AG04449 (cell line): ENCODE measurements at regions of chr11 and their contacts with region 1.

Region 1: GRCh38 chr11:74559110-74559933 is 33.1 kb upstream of the POLD3 start:
- DNase-seq: no peak
- H3K4me3 ChIP-seq: no peak overlapping the region
- CTCF ChIP-seq: no peak

Region 2: DNA sequence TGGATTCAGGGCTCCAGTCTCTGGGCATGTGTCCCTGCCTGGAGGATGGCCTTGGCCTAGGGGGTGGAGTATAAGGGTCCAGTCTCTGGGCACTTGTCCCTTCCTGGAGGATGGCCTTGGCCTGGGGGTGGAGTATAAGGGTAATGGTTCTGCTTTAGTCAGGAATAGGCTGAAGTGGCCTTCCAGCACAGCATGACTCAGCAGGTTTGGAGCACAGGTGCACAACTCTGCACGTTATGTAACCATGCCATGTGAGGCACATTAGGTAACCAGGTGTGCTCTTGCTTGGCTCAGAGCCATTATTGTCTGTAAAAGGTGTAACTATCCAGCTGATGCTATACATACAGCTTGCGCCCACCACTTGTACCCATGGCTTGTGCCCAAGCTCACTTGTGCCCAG is 15.3 kb before region 1 on chr11:
- CTCF ChIA-PET with region 1: no interaction called
- POLR2A ChIA-PET with region 1: no interaction called
- DNase-seq: no peak
- H3K4me3 ChIP-seq: no peak overlapping the region
- CTCF ChIP-seq: no peak

Region 3: GRCh38 chr11:74570266-74571061 is 11.1 kb after region 1 on chr11:
- CTCF ChIA-PET with region 1: interaction called, 21 read pairs
- POLR2A ChIA-PET with region 1: no interaction called
- DNase-seq: no peak
- H3K4me3 ChIP-seq: no peak overlapping the region
- CTCF ChIP-seq: peak; percentile 62